H1 (cell line): ENCODE measurements at regions of chr4 and their contacts with region 1.

Region 1: GRCh38 chr4:57163530-57164459 is 53.6 kb upstream of the IGFBP7 start:
- DNase-seq: peak; percentile 83 to 95
- H3K4me3 ChIP-seq: peak overlapping the region; percentile 33 to 64 (median 60); a peak in 7 of 8 replicates
- H3K27ac ChIP-seq: no peak overlapping the region; the same call in 1 of the 2 replicates
- H3K4me1 ChIP-seq: peaks cover 0 to 3% (median 1%) of the 10 kb centered on the region in 4 experiments; a peak in 2 of 7 replicates
- H3K27me3 ChIP-seq: peaks cover 0 to 10% (median 9%) of the 10 kb centered on the region in 4 experiments; a peak in 4 of 7 replicates
- CTCF ChIP-seq: peak; percentile 95 to 97 (median 96)
- EP300 ChIP-seq: no peak
- POLR2A ChIP-seq: no peak
- RAD21 ChIP-seq: peak; percentile 97 to 98

Region 2: GRCh38 chr4:56979421-56980072 is 184.2 kb before region 1 on chr4:
- CTCF ChIA-PET with region 1: no interaction called
- POLR2A ChIA-PET with region 1: no interaction called
- DNase-seq: no peak
- H3K4me3 ChIP-seq: peak overlapping the region; percentile 85 to 92 (median 90)
- H3K27ac ChIP-seq: no peak overlapping the region
- H3K4me1 ChIP-seq: peaks cover 0 to 4% (median 0%) of the 10 kb centered on the region in 4 experiments; a peak in 3 of 7 replicates
- H3K27me3 ChIP-seq: no peaks in the 10 kb centered on the region; a peak in 1 of 7 replicates
- CTCF ChIP-seq: no peak
- EP300 ChIP-seq: no peak
- POLR2A ChIP-seq: no peak
- RAD21 ChIP-seq: no peak

Region 3: GRCh38 chr4:57182132-57182874 is 18.5 kb after region 1 on chr4:
- CTCF ChIA-PET with region 1: interaction called, 13 read pairs
- POLR2A ChIA-PET with region 1: no interaction called
- DNase-seq: no peak
- H3K4me3 ChIP-seq: no peak overlapping the region
- H3K27ac ChIP-seq: no peak overlapping the region
- H3K4me1 ChIP-seq: peaks cover 0 to 4% (median 3%) of the 10 kb centered on the region in 4 experiments; a peak in 3 of 7 replicates
- H3K27me3 ChIP-seq: no peaks in the 10 kb centered on the region
- CTCF ChIP-seq: no peak
- EP300 ChIP-seq: no peak
- POLR2A ChIP-seq: no peak
- RAD21 ChIP-seq: no peak

Region 4: DNA sequence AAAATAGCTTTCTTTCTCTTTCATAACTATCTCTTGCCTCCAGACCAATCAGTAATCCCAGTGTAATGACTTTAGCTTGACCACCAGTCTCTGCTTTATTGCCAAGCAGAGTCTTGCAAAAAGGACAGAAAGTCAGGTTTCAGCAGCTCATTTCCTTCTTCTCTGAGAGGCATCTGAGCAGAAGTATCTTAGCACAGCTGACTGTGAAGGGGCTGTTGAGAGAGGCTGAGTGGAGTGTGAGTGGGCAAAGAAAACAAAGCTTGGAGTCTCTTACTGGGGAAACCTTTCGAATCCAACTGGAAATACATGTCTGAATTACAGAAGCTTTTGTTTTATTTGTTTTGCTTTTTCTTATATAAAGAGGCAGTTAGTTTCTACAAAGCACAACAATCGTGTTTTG is 116.7 kb after region 1 on chr4:
- CTCF ChIA-PET with region 1: interaction called, 14 read pairs
- POLR2A ChIA-PET with region 1: no interaction called
- DNase-seq: no peak
- H3K4me3 ChIP-seq: no peak overlapping the region
- H3K27ac ChIP-seq: no peak overlapping the region
- H3K4me1 ChIP-seq: peaks cover 0 to 5% (median 2%) of the 10 kb centered on the region in 4 experiments; a peak in 2 of 7 replicates
- H3K27me3 ChIP-seq: no peaks in the 10 kb centered on the region; a peak in 1 of 7 replicates
- CTCF ChIP-seq: no peak
- EP300 ChIP-seq: no peak
- POLR2A ChIP-seq: no peak
- RAD21 ChIP-seq: no peak

Region 5: GRCh38 chr4:57405385-57405784 is 241.6 kb after region 1 on chr4:
- CTCF ChIA-PET with region 1: interaction called, 31 read pairs
- POLR2A ChIA-PET with region 1: no interaction called
- DNase-seq: no peak
- H3K4me3 ChIP-seq: no peak overlapping the region
- H3K27ac ChIP-seq: no peak overlapping the region
- H3K4me1 ChIP-seq: peaks cover 0 to 6% (median 0%) of the 10 kb centered on the region in 4 experiments; a peak in 1 of 7 replicates
- H3K27me3 ChIP-seq: no peaks in the 10 kb centered on the region
- CTCF ChIP-seq: no peak
- EP300 ChIP-seq: no peak
- POLR2A ChIP-seq: no peak
- RAD21 ChIP-seq: no peak

Region 6: GRCh38 chr4:57437647-57438046 is 273.9 kb after region 1 on chr4:
- CTCF ChIA-PET with region 1: interaction called, 55 read pairs
- POLR2A ChIA-PET with region 1: no interaction called
- DNase-seq: no peak
- H3K4me3 ChIP-seq: no peak overlapping the region
- H3K27ac ChIP-seq: no peak overlapping the region
- H3K4me1 ChIP-seq: no peaks in the 10 kb centered on the region
- H3K27me3 ChIP-seq: no peaks in the 10 kb centered on the region
- CTCF ChIP-seq: no peak
- EP300 ChIP-seq: no peak
- POLR2A ChIP-seq: no peak
- RAD21 ChIP-seq: no peak